T-cell (primary cell): ENCODE measurements at regions of chr1 and their contacts with region 1.

Region 1: DNA sequence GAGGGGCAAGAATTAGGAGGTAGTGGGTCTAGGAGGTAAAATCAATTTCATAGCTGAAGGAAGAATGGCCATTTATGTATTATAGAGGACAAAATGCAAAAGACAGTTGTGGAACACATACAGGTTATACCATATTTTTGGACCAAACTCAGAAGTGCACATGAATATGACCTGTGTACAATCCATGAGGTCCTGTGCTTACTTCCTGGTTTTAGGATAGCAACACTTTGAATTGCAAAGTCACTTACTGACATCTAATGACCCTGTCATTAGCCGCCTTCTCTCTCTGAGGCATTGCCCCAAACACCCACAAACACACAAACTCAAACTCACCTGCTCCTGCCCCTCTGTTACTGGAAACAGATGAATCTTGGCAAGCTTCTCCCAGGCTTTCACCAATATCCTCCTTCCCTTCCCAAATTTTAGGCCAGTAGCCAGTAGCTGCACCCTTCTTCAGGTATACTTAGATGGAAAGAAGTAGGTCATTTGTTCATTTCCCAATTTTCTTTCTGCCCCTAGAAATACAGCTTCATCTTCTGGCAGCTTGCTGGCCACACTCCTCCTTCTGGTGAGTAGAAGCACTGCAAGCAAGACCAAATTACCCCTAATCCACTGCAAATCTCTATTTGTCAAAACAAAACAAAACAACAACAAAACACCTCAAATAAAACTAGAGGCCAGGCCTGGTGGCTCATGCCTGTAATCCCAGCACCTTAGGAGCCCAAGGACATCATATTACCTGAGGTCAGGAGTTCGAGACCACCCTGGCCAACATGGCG is 13.7 kb upstream of the RPL5 start:
- DNase-seq: peak in 10 of 35 experiments; percentile 1 to 53 (median 9)
- ATAC-seq: peak in 1 of 4 experiments; percentile 54
- H3K4me3 ChIP-seq: no peak overlapping the region
- H3K4me3 Mint-ChIP-seq: no peak overlapping the region
- H3K27ac ChIP-seq: no peak overlapping the region
- H3K27ac Mint-ChIP-seq: no peak overlapping the region
- H3K4me1 ChIP-seq: no peaks in the 10 kb centered on the region
- H3K4me1 Mint-ChIP-seq: no peaks in the 10 kb centered on the region
- H3K27me3 ChIP-seq: peaks cover 0 to 4% of the 10 kb centered on the region in 2 experiments
- H3K27me3 Mint-ChIP-seq: peaks cover 4 to 9% of the 10 kb centered on the region in 2 donors

Region 2: DNA sequence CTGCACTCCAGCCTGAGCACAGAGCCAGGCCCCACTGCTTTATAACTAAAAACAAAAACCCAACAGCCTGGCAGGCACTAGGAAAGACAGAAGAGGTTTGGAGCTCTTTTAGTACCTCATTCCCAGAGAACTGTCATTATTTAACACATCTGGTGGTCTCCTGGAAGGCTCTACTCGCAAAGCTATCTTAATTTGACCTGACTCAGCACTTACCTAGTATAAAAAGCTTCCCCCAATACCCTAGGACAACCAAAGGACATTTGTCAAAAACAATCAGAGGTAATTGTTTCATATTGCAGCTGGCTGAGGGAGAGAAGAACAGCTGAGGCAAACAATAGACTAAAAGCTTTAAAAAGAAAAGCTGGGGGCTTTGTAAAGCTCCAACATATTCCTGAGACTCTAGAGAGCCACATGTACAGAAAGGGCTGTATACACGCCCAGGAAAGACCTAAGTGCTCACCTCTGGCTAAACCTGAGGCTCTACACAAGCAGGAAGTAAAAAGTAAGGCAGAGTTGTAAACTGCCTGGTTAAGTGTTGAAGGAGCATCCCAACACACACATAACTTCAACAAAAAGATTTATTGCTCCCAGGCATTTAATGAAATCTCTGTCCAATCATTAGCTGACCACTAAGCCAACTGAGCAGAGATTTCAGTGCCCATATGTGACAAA is 1821.3 kb before region 1 on chr1:
- CTCF ChIA-PET with region 1: interaction called in 1 of 2 experiments, 14 read pairs
- POLR2A ChIA-PET with region 1: no interaction called
- DNase-seq: no peak
- ATAC-seq: no peak
- H3K4me3 ChIP-seq: no peak overlapping the region
- H3K4me3 Mint-ChIP-seq: peak overlapping the region in 1 of 3 donors; percentile 15
- H3K27ac ChIP-seq: no peak overlapping the region
- H3K27ac Mint-ChIP-seq: no peak overlapping the region
- H3K4me1 ChIP-seq: peaks cover 0 to 14% of the 10 kb centered on the region in 2 experiments
- H3K4me1 Mint-ChIP-seq: peaks cover 81 to 86% (median 86%) of the 10 kb centered on the region in 3 donors
- H3K27me3 ChIP-seq: no peaks in the 10 kb centered on the region
- H3K27me3 Mint-ChIP-seq: no peaks in the 10 kb centered on the region

Region 3: GRCh38 chr1:92485381-92486257 is 332.6 kb before region 1 on chr1:
- CTCF ChIA-PET with region 1: no interaction called
- POLR2A ChIA-PET with region 1: no interaction called
- DNase-seq: peak; percentile 53 to 86 (median 71)
- ATAC-seq: peak; percentile 66 to 74 (median 68)
- H3K4me3 ChIP-seq: peak overlapping the region; percentile 77 to 95
- H3K4me3 Mint-ChIP-seq: peak overlapping the region; percentile 89 to 98 (median 95)
- H3K27ac ChIP-seq: peak overlapping the region; percentile 73
- H3K27ac Mint-ChIP-seq: peak overlapping the region; percentile 89 to 95
- H3K4me1 ChIP-seq: peaks cover 11 to 45% of the 10 kb centered on the region in 2 experiments
- H3K4me1 Mint-ChIP-seq: peaks cover 37 to 43% (median 42%) of the 10 kb centered on the region in 3 donors
- H3K27me3 ChIP-seq: peaks cover 0 to 5% of the 10 kb centered on the region in 2 experiments
- H3K27me3 Mint-ChIP-seq: peaks cover 0 to 5% of the 10 kb centered on the region in 2 donors

Region 4: DNA sequence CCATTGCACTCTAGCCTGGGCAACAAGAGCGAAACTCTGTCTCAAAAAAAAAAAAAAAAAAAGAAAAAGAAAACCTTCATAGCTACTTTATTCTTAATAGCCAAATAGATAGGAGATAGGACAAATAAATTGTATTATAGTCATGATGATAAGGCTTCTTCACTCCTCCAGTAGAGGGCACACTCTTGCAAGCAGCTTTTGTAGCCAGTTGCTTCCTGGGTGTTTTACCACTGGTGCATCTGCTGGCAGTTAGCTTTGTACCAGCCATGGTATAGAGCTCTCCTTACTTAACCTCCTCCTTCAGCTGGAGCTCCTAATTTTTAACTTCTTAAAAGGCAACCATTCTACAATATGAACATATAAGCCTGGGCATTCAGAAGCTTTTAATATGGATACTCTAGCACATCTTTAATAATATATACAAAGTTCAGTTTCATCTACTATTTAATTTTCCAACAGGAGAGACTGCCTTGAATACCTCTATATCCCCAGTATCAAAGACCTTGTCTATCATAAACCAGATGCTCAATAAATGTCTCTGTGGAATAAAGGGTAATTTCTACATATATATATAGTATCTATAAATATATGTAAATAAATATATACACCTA is 69.0 kb before region 1 on chr1:
- CTCF ChIA-PET with region 1: interaction called, 15 to 28 read pairs
- POLR2A ChIA-PET with region 1: no interaction called
- DNase-seq: peak in 27 of 35 experiments; percentile 1 to 65 (median 13)
- ATAC-seq: peak; percentile 40 to 61 (median 56)
- H3K4me3 ChIP-seq: no peak overlapping the region
- H3K4me3 Mint-ChIP-seq: no peak overlapping the region
- H3K27ac ChIP-seq: no peak overlapping the region
- H3K27ac Mint-ChIP-seq: no peak overlapping the region
- H3K4me1 ChIP-seq: no peaks in the 10 kb centered on the region
- H3K4me1 Mint-ChIP-seq: no peaks in the 10 kb centered on the region
- H3K27me3 ChIP-seq: no peaks in the 10 kb centered on the region
- H3K27me3 Mint-ChIP-seq: no peaks in the 10 kb centered on the region